ENCODE measurements at regions of chr17 and their contacts with region 1.

Region 1: GRCh38 chr17:71649941-71650350 is 470.9 kb upstream of the SOX9 start:
- DNase-seq: no peak
- ATAC-seq: no peak
- H3K4me3 ChIP-seq: no peak overlapping the region
- H3K27ac ChIP-seq: no peak overlapping the region
- H3K4me1 ChIP-seq: no peaks in the 10 kb centered on the region
- H3K27me3 ChIP-seq: no peaks in the 10 kb centered on the region
- CTCF ChIP-seq: no peak
- POLR2A ChIP-seq: no peak

Region 2: DNA sequence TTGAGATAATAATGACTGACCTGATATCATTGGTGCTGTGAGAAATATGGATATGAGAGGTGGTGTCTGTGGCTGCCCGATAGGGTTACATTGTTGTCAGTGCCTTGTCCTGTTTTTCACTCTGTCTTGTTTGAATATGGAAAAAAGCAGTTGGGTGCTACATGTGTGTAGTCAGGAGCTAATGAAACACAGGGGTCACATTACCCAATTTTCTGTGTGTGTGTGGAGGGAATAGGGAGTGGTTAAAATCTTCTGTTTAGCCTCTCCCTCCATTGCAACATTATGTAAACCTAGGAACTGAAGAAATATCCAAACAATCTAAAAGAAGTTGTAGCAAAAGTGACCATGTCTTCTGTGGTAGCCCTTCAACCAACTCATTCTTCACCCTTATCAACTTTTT is 56.9 kb before region 1 on chr17:
- intact Hi-C with region 1: loop called in 2 of 10 experiments (anchors 10 kb)
- DNase-seq: no peak
- ATAC-seq: no peak
- H3K4me3 ChIP-seq: no peak overlapping the region
- H3K27ac ChIP-seq: no peak overlapping the region
- H3K4me1 ChIP-seq: no peaks in the 10 kb centered on the region
- H3K27me3 ChIP-seq: no peaks in the 10 kb centered on the region
- CTCF ChIP-seq: no peak
- POLR2A ChIP-seq: no peak

Measured in heart left ventricle (tissue), 16 donors.